Activated B cell treated with CpG ODN at 0.5 μM for 24 hours (primary cell): ENCODE measurements at regions of chr1 and their contacts with region 1.

Region 1: DNA sequence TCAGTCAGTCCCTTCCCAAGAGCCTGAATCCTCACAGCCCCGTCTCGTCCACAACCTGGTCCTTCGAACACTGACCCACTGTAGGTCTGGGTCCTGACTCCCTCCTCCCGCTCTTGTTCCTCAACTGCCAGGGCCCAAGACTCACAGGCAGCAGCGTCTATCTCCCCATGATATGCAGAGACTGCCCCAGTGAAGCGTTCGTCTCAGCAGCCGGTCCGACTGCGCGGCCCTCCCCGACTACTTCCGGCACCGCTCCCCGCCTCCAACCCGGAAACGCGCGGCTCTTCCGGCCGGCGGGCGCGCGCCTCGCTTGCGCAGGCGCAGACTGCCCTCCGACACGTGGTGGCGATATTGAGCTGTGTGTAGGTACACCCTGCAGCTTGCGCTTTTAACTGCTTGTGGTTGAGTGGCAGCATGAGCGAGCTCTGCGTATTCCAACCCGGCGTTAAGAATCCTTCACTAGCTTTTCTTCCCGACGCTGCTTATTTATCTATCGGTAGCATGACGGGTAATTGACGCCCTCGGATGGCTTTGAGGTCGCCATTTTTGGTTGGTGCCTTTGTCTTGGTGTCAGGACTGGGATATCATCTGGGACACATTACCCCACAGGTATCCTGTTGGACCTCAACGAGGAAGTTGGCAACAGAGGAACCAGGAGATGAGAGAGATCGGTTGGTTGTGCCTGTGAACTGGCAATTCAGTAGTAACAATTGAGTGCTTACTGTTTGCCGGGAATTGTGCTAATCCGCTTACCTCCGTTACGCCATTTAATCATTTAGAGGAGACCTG is at the start of gene TAF12:
- DNase-seq: peak; percentile 78
- ATAC-seq: peak; percentile 80
- H3K4me3 Mint-ChIP-seq: peak within 1 kb of the TSS; percentile 96
- H3K27ac Mint-ChIP-seq: peak within 1 kb of the TSS; percentile 97
- H3K4me1 Mint-ChIP-seq: peaks cover 50% of the 10 kb centered on the region
- H3K27me3 Mint-ChIP-seq: no peaks in the 10 kb centered on the region
- CTCF ChIP-seq: no peak
- total RNA-seq, gene TAF12: 17.1 and 18.5 TPM in 2 replicates

Region 2: DNA sequence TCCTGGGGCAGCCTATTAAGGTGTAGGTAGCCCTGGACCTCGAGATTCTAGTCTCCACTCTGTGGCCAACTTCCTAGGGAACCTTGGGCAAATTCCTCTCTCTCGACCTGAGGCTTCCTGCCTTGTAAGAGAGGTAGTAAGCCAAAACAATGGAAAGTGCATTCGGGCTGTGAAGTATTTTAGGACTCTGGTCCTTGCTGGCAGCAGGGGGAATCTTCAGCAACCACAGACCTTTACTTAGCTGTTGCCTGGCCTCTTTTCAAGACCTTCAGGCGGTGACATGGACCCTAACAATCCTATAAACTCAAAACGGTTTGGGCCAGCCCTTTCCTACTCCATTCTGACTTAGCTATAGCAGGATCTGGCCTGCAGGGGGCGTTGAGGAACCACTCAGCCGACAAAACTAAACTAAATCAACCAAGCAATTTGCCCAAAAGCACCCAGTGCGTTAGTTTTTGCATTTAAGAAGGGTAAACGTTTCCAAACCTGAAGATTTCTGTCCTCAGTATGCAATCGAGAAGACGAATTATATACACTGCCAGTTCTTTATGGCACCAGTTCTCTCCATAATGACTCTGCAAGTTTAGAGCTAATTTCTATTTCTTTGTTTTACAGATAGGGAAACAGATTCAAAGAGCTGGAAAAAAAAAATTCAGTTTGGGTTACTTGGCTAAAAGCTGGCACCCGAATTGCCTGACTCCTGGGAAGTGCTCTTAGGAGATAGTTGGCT is 394.6 kb before region 1 on chr1:
- CTCF ChIA-PET with region 1: no interaction called
- POLR2A ChIA-PET with region 1: interaction called, 9 read pairs
- intact Hi-C with region 1: loop called (anchors 5 kb)
- DNase-seq: peak; percentile 69
- ATAC-seq: peak; percentile 23
- H3K4me3 Mint-ChIP-seq: peak overlapping the region; percentile 72
- H3K27ac Mint-ChIP-seq: peak overlapping the region; percentile 99
- H3K4me1 Mint-ChIP-seq: peaks cover 58% of the 10 kb centered on the region
- H3K27me3 Mint-ChIP-seq: no peaks in the 10 kb centered on the region
- CTCF ChIP-seq: peak; percentile 57

Region 3: GRCh38 chr1:28505406-28506187 is 137.4 kb before region 1 on chr1 and contains the start of gene RCC1:
- CTCF ChIA-PET with region 1: no interaction called
- POLR2A ChIA-PET with region 1: interaction called, 59 read pairs
- intact Hi-C with region 1: loop called (anchors 1 kb)
- DNase-seq: peak; percentile 82
- ATAC-seq: peak; percentile 87
- H3K4me3 Mint-ChIP-seq: peak within 1 kb of the TSS; percentile 98
- H3K27ac Mint-ChIP-seq: peak within 1 kb of the TSS; percentile 98
- H3K4me1 Mint-ChIP-seq: peaks cover 38% of the 10 kb centered on the region
- H3K27me3 Mint-ChIP-seq: no peaks in the 10 kb centered on the region
- CTCF ChIP-seq: no peak
- total RNA-seq, gene RCC1: 45.2 and 47.5 TPM in 2 replicates

Region 4: GRCh38 chr1:28552758-28553663 is 90.0 kb before region 1 on chr1 and contains the start of gene TRNAU1AP:
- CTCF ChIA-PET with region 1: no interaction called
- POLR2A ChIA-PET with region 1: interaction called, 21 read pairs
- intact Hi-C with region 1: loop called (anchors 1 kb)
- DNase-seq: peak; percentile 94
- ATAC-seq: peak; percentile 93
- H3K4me3 Mint-ChIP-seq: peak within 1 kb of the TSS; percentile 99
- H3K27ac Mint-ChIP-seq: peak within 1 kb of the TSS; percentile 98
- H3K4me1 Mint-ChIP-seq: peaks cover 26% of the 10 kb centered on the region
- H3K27me3 Mint-ChIP-seq: no peaks in the 10 kb centered on the region
- CTCF ChIP-seq: no peak
- total RNA-seq, gene TRNAU1AP: 36.9 and 42.0 TPM in 2 replicates

Region 5: DNA sequence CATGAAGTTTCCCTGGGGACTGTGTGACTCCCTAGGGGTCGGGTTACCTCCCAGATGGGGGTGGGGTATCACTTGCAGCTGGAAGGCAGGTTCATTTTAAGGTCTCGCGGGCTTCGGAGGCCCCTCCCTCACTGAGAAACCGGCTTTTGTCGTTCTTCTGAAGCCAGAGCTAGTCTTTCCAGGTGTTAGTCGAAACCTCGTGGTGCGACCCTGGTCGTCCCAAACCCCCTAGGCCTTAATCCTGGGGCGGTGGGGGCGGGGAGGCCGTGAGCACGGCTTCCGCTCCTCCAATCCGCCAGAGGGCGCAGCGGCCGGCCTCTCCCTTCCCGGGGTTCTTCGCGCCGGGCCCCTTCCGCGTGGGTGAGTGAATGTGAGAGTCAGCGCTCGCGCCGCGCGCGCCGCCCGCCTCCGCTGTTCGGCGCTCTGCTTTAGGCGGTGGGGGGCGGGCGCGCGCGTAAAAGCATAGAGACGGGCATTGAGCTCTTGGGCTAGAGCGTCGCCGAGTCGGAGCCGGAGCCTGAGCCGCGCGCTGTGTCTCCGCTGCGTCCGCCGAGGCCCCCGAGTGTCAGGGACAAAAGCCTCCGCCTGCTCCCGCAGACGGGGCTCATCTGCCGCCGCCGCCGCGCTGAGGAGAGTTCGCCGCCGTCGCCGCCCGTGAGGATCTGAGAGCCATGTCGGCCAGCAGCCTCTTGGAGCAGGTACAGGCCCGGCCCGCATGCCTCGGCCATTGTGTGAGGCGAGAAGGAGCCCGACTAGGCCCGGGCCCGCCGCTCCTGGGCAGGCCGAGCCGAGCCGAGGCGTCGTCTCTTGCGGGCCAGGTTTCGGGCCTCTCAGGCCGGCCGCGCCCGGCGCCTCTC is 93.6 kb after region 1 on chr1 and contains the start of gene YTHDF2:
- CTCF ChIA-PET with region 1: interaction called, 19 read pairs
- POLR2A ChIA-PET with region 1: interaction called, 132 read pairs
- intact Hi-C with region 1: loop called (anchors 1 kb)
- DNase-seq: peak; percentile 96
- ATAC-seq: peak; percentile 93
- H3K4me3 Mint-ChIP-seq: peak within 1 kb of the TSS; percentile 96
- H3K27ac Mint-ChIP-seq: peak within 1 kb of the TSS; percentile 91
- H3K4me1 Mint-ChIP-seq: peaks cover 30% of the 10 kb centered on the region
- H3K27me3 Mint-ChIP-seq: no peaks in the 10 kb centered on the region
- CTCF ChIP-seq: peak; percentile 83
- total RNA-seq, gene YTHDF2: 70.6 and 81.2 TPM in 2 replicates

Region 6: DNA sequence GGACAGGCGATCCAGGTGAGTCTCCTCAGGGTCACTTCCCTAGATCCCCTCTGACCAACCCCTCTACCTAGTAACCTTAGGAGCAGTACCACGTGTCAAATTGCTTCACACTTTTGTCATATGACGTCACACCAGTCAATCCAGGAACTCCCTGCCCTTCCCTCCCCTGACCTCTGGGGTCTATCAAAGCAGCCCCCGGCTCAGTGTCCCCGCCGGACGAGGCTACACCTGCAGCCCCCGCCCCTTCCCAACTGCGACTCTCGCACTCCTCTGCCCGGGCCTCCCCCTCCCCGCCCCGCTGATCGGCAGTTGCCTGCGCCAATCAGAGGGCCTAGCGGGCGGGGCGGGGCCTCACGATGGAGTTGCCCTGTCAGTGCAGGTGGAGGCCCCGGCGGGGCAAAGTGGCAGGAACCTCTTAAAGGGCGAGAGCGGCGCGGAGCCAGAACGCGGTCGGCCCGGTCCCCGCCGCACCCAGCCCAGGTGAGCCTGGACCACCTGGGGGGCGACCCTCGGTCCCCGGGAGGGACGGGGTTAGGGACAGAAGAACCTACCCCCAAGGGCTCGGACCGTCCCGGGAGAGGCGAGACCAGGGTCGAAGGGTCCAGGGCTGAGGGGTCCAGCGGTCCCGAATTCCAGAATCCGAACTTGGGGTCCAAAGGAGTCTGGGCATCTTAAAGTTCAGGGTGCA is 243.8 kb after region 1 on chr1:
- CTCF ChIA-PET with region 1: no interaction called
- POLR2A ChIA-PET with region 1: interaction called, 10 read pairs
- intact Hi-C with region 1: loop called (anchors 2 kb)
- DNase-seq: peak; percentile 94
- ATAC-seq: peak; percentile 75
- H3K4me3 Mint-ChIP-seq: peak overlapping the region; percentile 88
- H3K27ac Mint-ChIP-seq: peak overlapping the region; percentile 91
- H3K4me1 Mint-ChIP-seq: peaks cover 58% of the 10 kb centered on the region
- H3K27me3 Mint-ChIP-seq: no peaks in the 10 kb centered on the region
- CTCF ChIP-seq: no peak